Activated naive CD4-positive, alpha-beta T cell treated with anti-CD3 and anti-CD28 coated beads, Interleukin-2, amount 10 ng/mL, durations not matched to agents 7 days and 5 days (primary cell): ENCODE measurements at regions of chr11 and their contacts with region 1.

Region 1: GRCh38 chr11:73760679-73761402 is at the start of gene RAB6A:
- DNase-seq: peak; percentile 100
- H3K4me3 Mint-ChIP-seq: peak within 1 kb of the TSS; percentile 86
- H3K27ac Mint-ChIP-seq: peak within 1 kb of the TSS; percentile 93
- H3K4me1 Mint-ChIP-seq: peaks cover 30% of the 10 kb centered on the region
- H3K27me3 Mint-ChIP-seq: peaks cover 11% of the 10 kb centered on the region

Region 2: GRCh38 chr11:73521621-73522020 is 239.2 kb before region 1 on chr11:
- CTCF ChIA-PET with region 1: no interaction called
- DNase-seq: no peak
- H3K4me3 Mint-ChIP-seq: no peak overlapping the region
- H3K27ac Mint-ChIP-seq: peak overlapping the region; percentile 2
- H3K4me1 Mint-ChIP-seq: peaks cover 29% of the 10 kb centered on the region
- H3K27me3 Mint-ChIP-seq: no peaks in the 10 kb centered on the region

Region 3: GRCh38 chr11:73729594-73730206 is 31.1 kb before region 1 on chr11:
- CTCF ChIA-PET with region 1: no interaction called
- DNase-seq: peak; percentile 23
- H3K4me3 Mint-ChIP-seq: no peak overlapping the region
- H3K27ac Mint-ChIP-seq: no peak overlapping the region
- H3K4me1 Mint-ChIP-seq: no peaks in the 10 kb centered on the region
- H3K27me3 Mint-ChIP-seq: no peaks in the 10 kb centered on the region

Region 4: GRCh38 chr11:73779084-73779902 is 18.5 kb after region 1 on chr11:
- CTCF ChIA-PET with region 1: interaction called, 36 read pairs
- DNase-seq: peak; percentile 99
- H3K4me3 Mint-ChIP-seq: peak overlapping the region; percentile 83
- H3K27ac Mint-ChIP-seq: peak overlapping the region; percentile 100
- H3K4me1 Mint-ChIP-seq: peaks cover 24% of the 10 kb centered on the region
- H3K27me3 Mint-ChIP-seq: peaks cover 10% of the 10 kb centered on the region